ENCODE measurements at regions of chr5 and their contacts with region 1.

Region 1: DNA sequence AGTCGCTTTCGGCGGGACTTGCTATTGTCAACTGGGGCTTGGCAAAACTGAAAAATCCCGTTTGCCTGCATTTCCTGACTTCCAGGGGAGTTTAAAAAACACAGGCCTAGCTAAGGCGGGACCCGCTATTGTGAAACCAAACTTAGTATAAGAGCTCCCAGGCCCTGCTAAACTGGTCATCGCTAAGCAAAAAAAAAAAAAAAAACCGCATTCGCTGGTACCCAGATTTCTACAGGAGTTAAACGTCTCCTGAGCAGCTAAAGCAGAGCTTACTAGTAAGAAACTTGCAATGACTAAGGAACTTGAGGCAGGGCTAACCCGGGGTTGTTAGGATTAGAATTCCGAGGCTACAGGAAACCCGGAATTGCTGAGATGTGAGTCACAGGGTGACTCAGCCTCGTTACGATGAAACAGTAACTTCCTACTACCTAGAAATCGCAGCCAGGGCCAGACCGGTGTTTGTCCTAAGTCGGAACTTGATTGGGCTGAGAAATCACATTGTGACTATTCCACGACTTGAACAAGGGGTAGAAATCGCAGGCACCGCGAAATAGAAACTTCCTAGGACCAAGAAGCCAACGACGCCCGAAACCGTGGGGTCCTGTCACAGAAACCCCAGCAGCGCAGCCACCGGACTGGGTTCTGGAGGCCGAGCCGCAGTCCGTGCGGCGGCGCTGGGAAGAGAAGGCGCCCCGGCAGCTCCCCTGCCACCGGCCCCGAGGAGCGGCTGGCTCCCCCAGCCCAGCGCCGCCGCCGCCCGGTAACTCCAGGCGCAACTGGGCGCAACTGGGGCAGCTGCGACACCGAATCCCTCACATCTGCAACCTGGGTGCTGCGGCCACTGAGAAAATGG is 89.5 kb downstream of the ANXA2R start:
- DNase-seq: peak; percentile 89
- H3K4me3 Mint-ChIP-seq: peak overlapping the region; percentile 95
- H3K27ac Mint-ChIP-seq: peak overlapping the region; percentile 100
- H3K4me1 Mint-ChIP-seq: peaks cover 37% of the 10 kb centered on the region
- H3K27me3 Mint-ChIP-seq: peaks cover 5% of the 10 kb centered on the region

Region 2: DNA sequence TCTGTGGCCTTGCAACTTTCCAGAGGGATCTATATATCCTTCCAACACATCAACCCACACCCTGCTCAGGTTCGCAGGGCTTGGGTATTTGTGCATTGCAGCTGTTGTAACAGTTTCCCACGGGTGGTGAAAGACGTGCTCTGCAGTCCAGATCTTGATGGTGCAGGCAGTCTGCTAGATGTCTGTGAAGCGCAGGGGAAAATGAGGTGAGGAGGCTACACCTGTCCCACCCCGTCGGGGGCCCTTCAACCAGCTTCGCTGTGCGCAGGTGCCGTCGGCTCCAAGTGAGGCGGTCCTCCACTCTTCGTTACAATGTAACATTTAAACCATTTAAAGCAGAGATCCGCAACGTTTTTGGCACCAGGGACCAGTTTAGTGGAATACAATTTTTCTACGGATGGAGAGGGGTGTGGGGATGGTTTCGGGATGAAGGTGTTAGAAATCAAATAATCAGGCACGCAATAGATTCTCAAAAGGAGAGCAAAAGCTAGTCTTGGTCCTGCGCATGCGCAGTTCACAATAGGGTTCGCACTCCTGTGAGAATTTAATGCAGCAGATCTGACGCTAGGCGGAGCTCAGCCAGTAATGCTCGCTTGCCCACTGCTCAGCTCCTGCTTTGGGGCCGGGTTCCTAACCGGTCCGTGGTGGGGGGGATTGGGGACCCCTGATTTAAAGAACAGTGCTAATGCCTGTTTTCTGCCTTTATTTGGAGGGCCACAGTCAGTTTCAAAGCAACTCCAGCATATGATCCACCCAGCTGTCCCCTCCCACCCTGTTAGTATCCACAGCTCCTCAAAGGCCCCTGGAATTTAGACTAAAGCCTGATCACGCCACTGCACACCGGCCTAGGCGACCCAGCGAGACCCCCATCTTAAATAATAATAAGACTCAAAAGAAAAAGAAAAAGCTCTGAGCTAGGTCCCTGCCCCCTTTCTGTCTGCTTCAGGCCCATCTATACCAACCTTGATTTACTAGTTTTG is 41.9 kb before region 1 on chr5:
- intact Hi-C with region 1: loop called (anchors 1 kb)
- DNase-seq: peak; percentile 96
- H3K4me3 Mint-ChIP-seq: peak overlapping the region; percentile 83
- H3K27ac Mint-ChIP-seq: peak overlapping the region; percentile 1
- H3K4me1 Mint-ChIP-seq: peaks cover 6% of the 10 kb centered on the region
- H3K27me3 Mint-ChIP-seq: peaks cover 35% of the 10 kb centered on the region

Region 3: DNA sequence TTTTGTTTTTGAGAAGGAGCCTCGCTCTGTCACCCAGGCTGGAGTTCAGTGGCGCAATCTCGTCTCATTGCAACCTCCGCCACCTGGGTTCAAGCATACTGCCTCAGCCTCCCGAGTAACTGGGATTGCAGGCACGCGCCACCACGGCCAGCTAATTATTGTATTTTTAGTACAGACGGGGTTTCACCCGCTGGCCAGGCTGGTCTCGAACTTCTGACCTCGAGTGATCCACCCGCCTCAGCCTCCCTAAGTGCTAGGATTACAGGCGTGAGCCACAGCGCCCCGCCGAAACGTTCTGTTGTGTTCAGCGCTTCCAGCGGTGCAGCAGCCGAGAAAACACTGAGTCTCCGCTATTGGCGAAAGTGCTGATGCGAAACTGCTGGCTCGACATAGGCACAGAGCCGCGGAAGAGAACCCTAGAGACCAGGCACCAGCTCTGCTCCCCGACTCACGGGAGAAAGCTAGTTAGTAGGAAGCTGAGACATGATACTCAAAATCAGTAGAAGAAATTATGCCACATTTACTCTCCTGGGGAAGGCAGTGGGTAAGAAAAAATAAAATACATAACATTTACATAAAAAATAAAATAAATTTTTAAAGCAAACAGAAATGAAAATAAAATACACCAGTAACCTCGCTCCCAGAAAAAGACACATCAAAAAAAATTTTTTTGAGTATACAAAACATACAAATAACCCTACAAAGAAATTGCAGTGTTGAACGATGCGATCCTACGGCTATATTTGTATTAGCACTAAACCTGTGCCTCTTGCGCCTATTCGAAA is 57.9 kb after region 1 on chr5:
- intact Hi-C with region 1: loop called (anchors 1 kb)
- DNase-seq: peak; percentile 96
- H3K4me3 Mint-ChIP-seq: peak overlapping the region; percentile 88
- H3K27ac Mint-ChIP-seq: peak overlapping the region; percentile 95
- H3K4me1 Mint-ChIP-seq: peaks cover 36% of the 10 kb centered on the region
- H3K27me3 Mint-ChIP-seq: no peaks in the 10 kb centered on the region

Region 4: DNA sequence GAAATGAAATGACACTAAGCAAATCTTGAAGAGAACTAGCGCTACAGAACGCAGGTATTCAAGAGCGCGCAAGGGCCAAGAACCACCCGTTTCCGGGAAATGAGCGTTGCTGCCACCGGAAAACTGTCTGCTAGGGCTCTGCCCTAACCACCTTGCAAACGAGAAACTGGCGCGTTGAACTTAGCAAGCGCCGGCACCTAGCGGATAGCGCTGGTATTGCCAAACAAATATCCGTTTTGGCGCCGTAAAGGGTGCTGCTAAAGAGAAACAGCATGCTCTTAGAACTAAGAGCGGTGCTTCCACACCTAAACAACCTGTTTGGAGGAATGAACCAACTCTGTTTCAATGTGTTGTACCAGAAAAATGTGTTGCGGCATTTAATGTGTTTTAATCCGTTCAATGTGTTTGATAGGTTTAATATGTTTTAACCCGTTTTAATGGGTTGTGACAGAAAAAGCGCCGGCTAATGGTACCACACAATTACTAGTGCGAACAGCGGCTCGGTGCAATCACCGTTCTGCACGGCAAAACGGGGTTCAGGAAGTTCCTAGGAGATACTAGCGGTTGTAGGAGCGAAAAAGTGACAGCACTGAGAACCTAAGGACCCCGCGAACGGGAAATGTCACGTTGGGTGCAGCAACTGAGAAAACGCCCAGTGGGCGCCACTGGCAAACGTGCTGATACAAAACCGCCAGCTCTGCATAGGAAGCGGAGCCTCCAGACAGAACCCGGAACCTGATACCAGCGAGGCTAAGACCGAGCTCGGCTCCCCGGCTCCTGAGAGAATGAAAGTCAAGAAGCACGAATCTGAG is 89.8 kb after region 1 on chr5 and contains the start of gene ANXA2R:
- intact Hi-C with region 1: loop called (anchors 1 kb)
- DNase-seq: peak; percentile 98
- H3K4me3 Mint-ChIP-seq: peak within 1 kb of the TSS; percentile 94
- H3K27ac Mint-ChIP-seq: peak within 1 kb of the TSS; percentile 96
- H3K4me1 Mint-ChIP-seq: peaks cover 46% of the 10 kb centered on the region
- H3K27me3 Mint-ChIP-seq: no peaks in the 10 kb centered on the region
- total RNA-seq, gene ANXA2R: 1.1 and 1.2 TPM in 2 replicates

Region 5: GRCh38 chr5:43191740-43192557 is 241.3 kb after region 1 on chr5 and contains the start of gene NIM1K:
- intact Hi-C with region 1: loop called (anchors 1 kb)
- DNase-seq: peak; percentile 85
- H3K4me3 Mint-ChIP-seq: peak within 1 kb of the TSS; percentile 86
- H3K27ac Mint-ChIP-seq: peak within 1 kb of the TSS; percentile 86
- H3K4me1 Mint-ChIP-seq: peaks cover 31% of the 10 kb centered on the region
- H3K27me3 Mint-ChIP-seq: peaks cover 15% of the 10 kb centered on the region
- total RNA-seq, gene NIM1K: 0.82 and 0.97 TPM in 2 replicates

Region 6: GRCh38 chr5:43602461-43603343 is 652.0 kb after region 1 on chr5 and contains the start of gene NNT:
- intact Hi-C with region 1: loop called (anchors 5 kb)
- DNase-seq: peak; percentile 94
- H3K4me3 Mint-ChIP-seq: peak within 1 kb of the TSS; percentile 91
- H3K27ac Mint-ChIP-seq: peak within 1 kb of the TSS; percentile 85
- H3K4me1 Mint-ChIP-seq: peaks cover 30% of the 10 kb centered on the region
- H3K27me3 Mint-ChIP-seq: no peaks in the 10 kb centered on the region
- total RNA-seq, gene NNT: 52.2 and 59.1 TPM in 2 replicates